ENCODE measurements at regions of chr12 and their contacts with region 1.

Region 1: GRCh38 chr12:108664338-108665258 is 30.9 kb upstream of the SELPLG start:
- DNase-seq: peak; percentile 76
- H3K4me3 ChIP-seq: peak overlapping the region in 2 of 3 experiments; percentile 24 to 56
- H3K27ac ChIP-seq: peak overlapping the region; percentile 82
- H3K4me1 ChIP-seq: peaks cover 19% of the 10 kb centered on the region
- H3K27me3 ChIP-seq: no peaks in the 10 kb centered on the region
- CTCF ChIP-seq: peak; percentile 92 to 99 (median 94)

Region 2: GRCh38 chr12:108744021-108744897 is 79.7 kb after region 1 on chr12:
- dilution Hi-C with region 1: no loop called
- DNase-seq: no peak
- H3K4me3 ChIP-seq: no peak overlapping the region
- H3K27ac ChIP-seq: no peak overlapping the region
- H3K4me1 ChIP-seq: no peaks in the 10 kb centered on the region
- H3K27me3 ChIP-seq: no peaks in the 10 kb centered on the region
- CTCF ChIP-seq: no peak

Region 3: DNA sequence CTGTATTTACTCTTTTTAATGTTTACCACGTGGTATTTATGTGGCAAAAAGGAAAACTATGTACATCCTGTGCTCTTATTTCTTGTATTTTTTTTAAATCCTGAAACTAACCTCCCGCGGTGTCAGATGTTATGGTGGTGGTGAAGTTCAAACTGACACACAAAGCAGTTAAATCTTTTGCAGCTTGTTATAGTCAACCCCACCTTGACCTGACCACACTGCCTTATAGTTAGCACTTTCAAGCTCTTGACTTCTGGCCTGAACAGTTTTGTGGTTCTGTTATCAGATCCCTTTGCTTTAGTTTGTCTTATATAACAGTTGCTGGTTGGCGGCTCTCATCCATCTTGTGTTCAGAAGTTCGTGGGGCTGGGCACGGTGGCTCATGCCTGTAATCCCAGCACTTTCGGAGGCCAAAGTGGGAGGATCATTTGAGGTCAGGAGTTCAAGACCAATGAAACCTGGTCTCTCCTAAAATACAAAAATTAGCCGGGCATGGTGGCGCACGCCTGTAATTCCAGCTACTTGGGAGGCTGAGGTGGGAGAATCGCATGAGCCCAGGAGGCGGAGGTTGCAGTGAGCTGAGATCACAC is 434.9 kb after region 1 on chr12:
- dilution Hi-C with region 1: loop called (anchors 10 kb)
- DNase-seq: no peak
- H3K4me3 ChIP-seq: no peak overlapping the region
- H3K27ac ChIP-seq: no peak overlapping the region
- H3K4me1 ChIP-seq: peaks cover 6% of the 10 kb centered on the region
- H3K27me3 ChIP-seq: no peaks in the 10 kb centered on the region
- CTCF ChIP-seq: no peak